PC-9 (cell line): ENCODE measurements at regions of chr20 and their contacts with region 1.

Region 1: DNA sequence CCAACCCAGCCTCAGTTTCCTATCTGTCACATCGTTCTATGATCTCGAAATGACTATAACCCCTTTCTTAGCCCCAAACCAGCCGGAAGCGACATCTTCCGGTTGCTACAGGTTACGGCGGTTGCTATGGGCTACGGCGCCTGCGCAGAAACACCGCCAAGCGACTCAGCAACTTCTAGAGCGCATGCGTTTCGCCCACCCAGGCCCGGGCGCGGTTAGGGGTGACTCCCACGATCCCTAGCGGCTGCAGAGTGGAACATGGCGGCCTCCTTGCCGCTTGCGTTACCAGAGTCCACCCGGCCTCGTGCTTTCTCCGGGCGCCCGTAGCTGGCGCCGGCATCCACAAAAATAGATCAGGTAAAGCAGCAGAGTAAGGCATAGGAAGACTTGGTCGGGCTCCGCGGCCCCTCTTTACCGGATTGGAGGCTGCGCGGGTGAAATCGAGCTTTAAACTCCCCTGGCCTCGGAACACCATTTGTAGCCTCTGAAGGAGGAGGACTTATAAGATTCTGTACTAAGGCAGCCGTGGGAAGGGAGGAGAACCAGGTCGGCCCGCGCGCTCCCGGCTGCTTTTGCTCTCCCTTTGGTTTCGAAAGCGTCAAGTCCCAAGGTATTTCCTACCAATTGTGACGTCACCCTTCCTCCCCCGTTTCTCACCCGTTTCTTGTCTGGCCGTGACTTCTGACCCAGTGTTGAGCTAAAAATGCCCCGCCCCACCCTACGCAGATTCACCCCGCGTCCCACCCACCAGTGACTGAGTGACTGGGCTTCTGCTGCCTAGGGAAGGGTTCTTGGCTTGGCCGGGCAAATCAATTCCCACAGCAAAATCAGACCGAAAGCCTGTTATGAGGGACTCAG is 3.5 kb downstream of the SDCBP2 start:
- DNase-seq: peak; percentile 88 to 96
- H3K4me3 ChIP-seq: peak overlapping the region; percentile 87
- H3K27ac ChIP-seq: peak overlapping the region; percentile 95
- H3K4me1 ChIP-seq: peaks cover 49% of the 10 kb centered on the region
- H3K27me3 ChIP-seq: no peaks in the 10 kb centered on the region
- CTCF ChIP-seq: no peak; the same call in 1 of the 2 replicates

Region 2: DNA sequence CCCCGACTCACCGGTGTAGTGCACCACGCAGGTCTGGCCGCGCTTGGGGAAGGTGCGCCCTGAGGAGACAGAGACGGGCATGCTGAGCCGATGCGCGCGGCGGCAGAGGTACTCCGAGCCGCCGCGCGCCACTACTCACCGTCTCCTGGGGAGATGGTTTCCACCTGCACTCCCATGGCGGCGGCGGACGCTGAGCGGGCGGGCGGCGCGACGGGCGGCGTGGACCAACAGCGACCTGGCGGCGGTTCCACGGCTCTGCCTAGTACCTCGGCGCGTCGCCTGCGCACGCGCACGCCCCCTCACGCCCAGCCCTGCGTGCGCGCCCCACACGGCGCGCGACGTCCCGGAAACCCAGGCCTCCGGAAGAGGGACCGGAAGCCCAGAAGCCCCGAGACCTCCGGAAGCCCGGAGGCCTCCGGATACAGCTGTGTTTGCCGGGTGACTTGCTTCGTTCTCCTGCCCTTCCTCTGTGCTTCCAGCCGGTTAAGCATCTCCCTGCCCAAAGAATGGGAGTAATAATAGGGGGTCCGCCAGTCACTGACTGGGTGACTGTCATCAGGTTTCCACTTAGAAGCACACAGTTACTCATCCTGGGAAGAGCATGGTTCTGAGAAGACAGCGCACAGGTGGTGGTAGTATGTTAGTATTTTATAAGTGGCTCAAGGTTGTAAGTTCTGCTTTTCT is 67.6 kb after region 1 on chr20 and contains the start of gene FKBP1A:
- CTCF ChIA-PET with region 1: no interaction called
- POLR2A ChIA-PET with region 1: no interaction called
- intact Hi-C with region 1: loop called (anchors 2 kb)
- DNase-seq: peak; percentile 83 to 89
- H3K4me3 ChIP-seq: peak within 1 kb of the TSS; percentile 97
- H3K27ac ChIP-seq: peak within 1 kb of the TSS; percentile 40; the same call in 1 of the 2 replicates
- H3K4me1 ChIP-seq: peaks cover 57% of the 10 kb centered on the region
- H3K27me3 ChIP-seq: no peaks in the 10 kb centered on the region
- CTCF ChIP-seq: no peak; the same call in 1 of the 2 replicates
- total RNA-seq, gene FKBP1A: 248 and 320 TPM in 2 replicates

Region 3: DNA sequence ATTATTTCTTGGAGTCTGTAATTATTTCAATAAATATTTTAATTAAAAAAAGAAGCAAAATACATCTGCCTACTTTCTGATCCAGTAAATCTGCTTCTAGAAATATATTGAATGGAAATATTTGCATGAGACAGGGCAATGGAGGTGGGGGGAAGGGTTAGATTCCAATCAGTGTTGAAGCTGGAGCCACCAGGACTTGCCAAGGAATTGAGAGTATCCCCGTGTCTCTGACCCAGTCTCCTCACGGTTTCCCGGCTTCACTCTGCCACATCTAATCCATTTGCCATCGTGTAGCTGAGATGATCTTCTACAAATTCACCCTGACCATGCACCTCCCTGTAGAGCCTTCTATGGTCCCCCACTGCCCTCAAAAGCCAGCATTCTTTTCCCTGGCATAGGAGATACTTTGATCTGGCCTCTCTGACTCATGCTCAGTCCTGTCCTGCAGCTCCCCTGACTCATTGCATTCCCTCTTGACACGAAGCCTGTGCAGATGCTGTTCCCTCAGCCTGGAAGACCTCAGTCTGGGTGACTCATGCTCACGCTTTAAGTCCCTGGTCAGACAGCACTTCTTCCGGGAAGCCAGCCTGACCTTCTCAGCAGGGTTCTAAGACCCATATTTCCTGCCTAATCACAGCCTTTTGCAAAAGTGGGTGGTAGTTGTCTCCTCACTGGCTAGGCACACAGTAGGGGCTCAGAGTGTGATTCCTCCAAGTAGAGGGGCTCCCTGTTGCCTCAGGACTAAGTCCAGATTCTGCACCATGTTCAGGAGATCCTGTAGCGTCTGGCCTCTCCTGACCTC is 90.5 kb after region 1 on chr20:
- CTCF ChIA-PET with region 1: no interaction called
- POLR2A ChIA-PET with region 1: interaction called, 4 read pairs
- intact Hi-C with region 1: loop called (anchors 1 kb)
- DNase-seq: peak; percentile 87 to 99
- H3K4me3 ChIP-seq: no peak overlapping the region
- H3K27ac ChIP-seq: peak overlapping the region; percentile 70
- H3K4me1 ChIP-seq: peaks cover 47% of the 10 kb centered on the region
- H3K27me3 ChIP-seq: no peaks in the 10 kb centered on the region
- CTCF ChIP-seq: no peak

Region 4: GRCh38 chr20:1466211-1467081 is 141.0 kb after region 1 on chr20 and contains the start of gene NSFL1C:
- CTCF ChIA-PET with region 1: no interaction called
- POLR2A ChIA-PET with region 1: interaction called, 26 read pairs
- intact Hi-C with region 1: no loop called
- DNase-seq: peak; percentile 79 to 98
- H3K4me3 ChIP-seq: peak within 1 kb of the TSS; percentile 88
- H3K27ac ChIP-seq: peak within 1 kb of the TSS; percentile 89
- H3K4me1 ChIP-seq: peaks cover 37% of the 10 kb centered on the region
- H3K27me3 ChIP-seq: no peaks in the 10 kb centered on the region
- CTCF ChIP-seq: peak; percentile 89
- total RNA-seq, gene NSFL1C: 151 and 160 TPM in 2 replicates

Region 5: DNA sequence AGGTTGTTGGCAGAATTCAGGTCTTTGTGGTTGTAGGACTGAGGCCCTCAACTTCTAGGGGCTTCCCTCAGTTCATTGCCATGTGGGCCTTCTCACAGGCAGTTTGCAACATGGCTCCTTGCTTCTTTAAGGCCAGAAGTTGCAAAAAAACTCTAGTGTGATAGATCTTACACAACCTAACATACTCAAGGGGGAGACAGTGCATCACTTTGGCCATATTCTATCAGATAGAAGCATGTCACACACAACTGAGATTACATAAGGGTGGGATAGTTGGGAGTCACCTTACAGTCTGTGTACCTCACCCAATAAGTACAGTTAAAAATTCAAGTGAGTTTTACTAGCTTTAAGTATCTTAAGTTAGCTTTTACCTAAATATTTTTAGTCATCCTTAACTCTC is 230.6 kb after region 1 on chr20:
- CTCF ChIA-PET with region 1: no interaction called
- POLR2A ChIA-PET with region 1: no interaction called
- intact Hi-C with region 1: no loop called
- DNase-seq: no peak
- H3K4me3 ChIP-seq: no peak overlapping the region
- H3K27ac ChIP-seq: no peak overlapping the region
- H3K4me1 ChIP-seq: no peaks in the 10 kb centered on the region
- H3K27me3 ChIP-seq: no peaks in the 10 kb centered on the region
- CTCF ChIP-seq: no peak

Region 6: DNA sequence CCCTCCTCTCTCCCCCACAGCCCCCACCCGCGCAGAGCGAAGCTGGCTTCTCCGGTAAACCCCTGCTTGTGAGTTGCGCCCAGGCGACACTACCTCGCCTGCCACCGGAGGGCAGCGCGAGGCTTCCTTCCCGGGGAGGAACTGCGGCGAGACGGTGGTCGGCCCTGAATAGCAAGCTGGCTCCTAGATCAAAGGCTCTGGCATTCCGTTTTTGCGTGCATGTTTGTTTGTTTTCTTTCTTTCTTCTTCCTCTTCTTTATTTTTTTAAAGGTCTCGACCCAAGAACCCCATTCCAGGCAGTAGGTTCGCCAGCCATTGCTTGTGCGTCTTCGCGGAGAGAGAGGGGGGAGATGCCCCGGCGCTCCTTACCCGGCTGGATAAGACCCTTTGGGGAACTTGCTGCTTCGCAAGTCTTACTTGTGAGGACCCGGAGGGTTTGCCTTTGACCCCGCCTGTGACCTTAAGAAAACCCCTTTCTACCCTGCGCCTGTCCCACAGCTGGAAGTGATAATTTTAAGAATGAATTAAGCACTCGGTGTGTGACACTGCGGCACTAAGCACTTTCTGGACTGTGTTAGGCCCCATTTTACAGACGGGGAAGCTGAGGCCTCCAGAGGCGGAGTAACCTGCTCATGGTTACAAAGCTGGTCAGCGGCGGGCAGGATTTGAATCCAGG is 477.1 kb after region 1 on chr20:
- CTCF ChIA-PET with region 1: no interaction called
- POLR2A ChIA-PET with region 1: no interaction called
- intact Hi-C with region 1: loop called (anchors 10 kb)
- DNase-seq: peak in 1 of 2 experiments; percentile 56
- H3K4me3 ChIP-seq: peak overlapping the region; percentile 54
- H3K27ac ChIP-seq: no peak overlapping the region
- H3K4me1 ChIP-seq: peaks cover 20% of the 10 kb centered on the region
- H3K27me3 ChIP-seq: no peaks in the 10 kb centered on the region
- CTCF ChIP-seq: peak; percentile 69